ENCODE measurements at regions of chr1 and their contacts with region 1.

Region 1: DNA sequence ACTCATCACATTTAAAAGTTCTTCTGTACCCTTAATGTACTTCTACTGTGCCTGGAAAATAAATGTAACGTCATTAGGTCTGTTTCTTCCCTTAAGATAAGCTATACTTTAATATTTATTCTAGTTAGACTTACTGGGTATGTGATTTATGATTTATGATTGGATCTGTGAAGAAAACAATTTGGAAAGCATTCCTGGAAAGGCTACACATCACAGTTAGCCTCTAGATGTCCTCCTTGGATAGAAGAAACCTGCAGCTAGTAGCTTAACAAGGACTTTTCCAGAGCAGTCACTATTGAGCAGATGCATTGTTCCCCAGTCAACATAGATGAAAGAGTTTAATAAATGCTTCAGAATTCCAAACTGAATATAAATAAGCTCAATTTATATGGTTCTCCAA is 22.2 kb upstream of the ABL2 start:
- DNase-seq: no peak
- ATAC-seq: peak; percentile 79
- H3K4me3 ChIP-seq: no peak overlapping the region
- H3K27ac ChIP-seq: no peak overlapping the region
- H3K4me1 ChIP-seq: no peaks in the 10 kb centered on the region
- H3K27me3 ChIP-seq: no peaks in the 10 kb centered on the region
- CTCF ChIP-seq: peak; percentile 28 to 51 (median 41); a peak in 4 of 6 replicates
- POLR2A ChIP-seq: no peak
- RAD21 ChIP-seq: peak; percentile 80

Region 2: GRCh38 chr1:179447489-179447888 is 195.8 kb after region 1 on chr1:
- CTCF ChIA-PET with region 1: interaction called, 13 read pairs
- POLR2A ChIA-PET with region 1: no interaction called
- RAD21 ChIA-PET with region 1: no interaction called
- intact Hi-C with region 1: no loop called
- DNase-seq: peak; percentile 12
- ATAC-seq: peak; percentile 67; the same call in 1 of the 2 replicates
- H3K4me3 ChIP-seq: no peak overlapping the region
- H3K27ac ChIP-seq: no peak overlapping the region
- H3K4me1 ChIP-seq: no peaks in the 10 kb centered on the region
- H3K27me3 ChIP-seq: no peaks in the 10 kb centered on the region
- CTCF ChIP-seq: peak; percentile 15 to 55 (median 54); a peak in 5 of 6 replicates
- POLR2A ChIP-seq: no peak
- RAD21 ChIP-seq: 0 out of 2 replicates have a peak, but pooled peaks have one; percentile 10

Region 3: GRCh38 chr1:179599623-179600249 is 348.1 kb after region 1 on chr1:
- CTCF ChIA-PET with region 1: interaction called, 11 read pairs
- POLR2A ChIA-PET with region 1: no interaction called
- RAD21 ChIA-PET with region 1: no interaction called
- intact Hi-C with region 1: loop called (anchors 1 kb)
- DNase-seq: peak; percentile 44
- ATAC-seq: peak; percentile 95
- H3K4me3 ChIP-seq: no peak overlapping the region
- H3K27ac ChIP-seq: no peak overlapping the region
- H3K4me1 ChIP-seq: no peaks in the 10 kb centered on the region
- H3K27me3 ChIP-seq: no peaks in the 10 kb centered on the region
- CTCF ChIP-seq: peak; percentile 55 to 70 (median 56); a peak in 5 of 6 replicates
- POLR2A ChIP-seq: no peak
- RAD21 ChIP-seq: peak; percentile 72